ENCODE measurements at regions of chr6 and their contacts with region 1.

Region 1: GRCh38 chr6:23184351-23184750 is 615.0 kb downstream of the HDGFL1 start:
- DNase-seq: no peak
- ATAC-seq: no peak
- H3K4me3 ChIP-seq: no peak overlapping the region
- H3K4me3 Mint-ChIP-seq: no peak overlapping the region
- H3K27ac ChIP-seq: no peak overlapping the region
- H3K27ac Mint-ChIP-seq: no peak overlapping the region
- H3K4me1 ChIP-seq: no peaks in the 10 kb centered on the region
- H3K4me1 Mint-ChIP-seq: no peaks in the 10 kb centered on the region
- H3K27me3 ChIP-seq: no peaks in the 10 kb centered on the region
- H3K27me3 Mint-ChIP-seq: no peaks in the 10 kb centered on the region

Region 2: DNA sequence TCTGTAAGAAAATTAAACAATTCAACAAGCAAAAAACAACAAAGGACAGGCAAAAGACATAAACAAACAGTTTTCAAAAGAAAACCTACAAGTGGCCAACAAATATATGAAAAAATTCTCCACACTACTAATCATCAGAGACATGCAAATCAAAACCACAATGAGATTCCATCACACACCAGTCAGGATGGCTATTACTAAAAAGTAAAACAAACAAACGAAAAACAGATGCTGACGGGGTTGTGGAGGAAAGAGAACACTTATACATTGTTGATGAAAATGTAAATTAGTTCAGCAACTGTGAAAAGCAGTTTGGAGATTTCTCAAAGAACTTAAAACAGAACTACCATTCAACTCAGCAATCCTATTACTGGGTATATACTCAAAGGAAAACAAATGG is 77.4 kb before region 1 on chr6:
- CTCF ChIA-PET with region 1: no interaction called
- POLR2A ChIA-PET with region 1: no interaction called
- DNase-seq: no peak
- ATAC-seq: no peak
- H3K4me3 ChIP-seq: no peak overlapping the region
- H3K4me3 Mint-ChIP-seq: no peak overlapping the region
- H3K27ac ChIP-seq: no peak overlapping the region
- H3K27ac Mint-ChIP-seq: no peak overlapping the region
- H3K4me1 ChIP-seq: no peaks in the 10 kb centered on the region
- H3K4me1 Mint-ChIP-seq: no peaks in the 10 kb centered on the region
- H3K27me3 ChIP-seq: no peaks in the 10 kb centered on the region
- H3K27me3 Mint-ChIP-seq: peaks cover 0 to 4% of the 10 kb centered on the region in 2 donors

Region 3: DNA sequence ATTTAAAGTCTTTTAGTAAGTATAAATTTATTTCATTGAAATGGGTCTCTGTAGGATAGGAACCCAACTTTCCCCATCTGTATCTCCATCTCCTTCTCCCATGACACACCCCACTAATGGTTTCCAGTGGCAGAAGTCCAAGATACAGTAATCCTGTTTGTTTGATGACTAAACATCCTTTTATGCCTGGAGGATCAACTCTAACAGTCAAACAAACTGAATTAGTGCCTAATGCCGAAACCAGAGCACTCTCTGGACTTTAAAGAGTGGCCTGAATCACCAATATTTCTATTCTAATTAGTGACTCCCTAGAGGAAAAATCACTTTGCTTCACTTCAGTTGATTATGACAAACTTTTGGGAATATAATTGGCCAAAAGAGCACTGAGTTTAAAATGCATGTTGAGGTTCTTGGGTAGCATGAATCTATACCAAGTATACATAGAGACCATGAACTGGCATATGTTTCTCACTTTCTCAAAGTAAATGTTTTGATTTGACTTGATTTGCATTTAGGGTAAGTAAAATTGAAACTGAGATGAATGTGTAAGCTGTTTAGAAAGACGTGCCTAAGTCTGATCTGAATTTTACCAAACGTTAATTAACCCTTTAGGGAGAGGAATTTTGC is 165.3 kb after region 1 on chr6:
- CTCF ChIA-PET with region 1: no interaction called
- POLR2A ChIA-PET with region 1: interaction called in 1 of 2 experiments, 10 read pairs
- DNase-seq: no peak
- ATAC-seq: no peak
- H3K4me3 ChIP-seq: no peak overlapping the region
- H3K4me3 Mint-ChIP-seq: no peak overlapping the region
- H3K27ac ChIP-seq: no peak overlapping the region
- H3K27ac Mint-ChIP-seq: no peak overlapping the region
- H3K4me1 ChIP-seq: no peaks in the 10 kb centered on the region
- H3K4me1 Mint-ChIP-seq: no peaks in the 10 kb centered on the region
- H3K27me3 ChIP-seq: no peaks in the 10 kb centered on the region
- H3K27me3 Mint-ChIP-seq: no peaks in the 10 kb centered on the region

Region 4: GRCh38 chr6:23704479-23705052 is 520.2 kb after region 1 on chr6:
- CTCF ChIA-PET with region 1: no interaction called
- POLR2A ChIA-PET with region 1: no interaction called
- DNase-seq: no peak
- ATAC-seq: no peak
- H3K4me3 ChIP-seq: no peak overlapping the region
- H3K4me3 Mint-ChIP-seq: no peak overlapping the region
- H3K27ac ChIP-seq: no peak overlapping the region
- H3K27ac Mint-ChIP-seq: no peak overlapping the region
- H3K4me1 ChIP-seq: no peaks in the 10 kb centered on the region
- H3K4me1 Mint-ChIP-seq: no peaks in the 10 kb centered on the region
- H3K27me3 ChIP-seq: no peaks in the 10 kb centered on the region
- H3K27me3 Mint-ChIP-seq: no peaks in the 10 kb centered on the region

Measured in T-cell (primary cell).